CD4-positive, alpha-beta T cell (primary cell): ENCODE measurements at regions of chr14 and their contacts with region 1.

Region 1: GRCh38 chr14:22886500-22887259 is 3.7 kb downstream of the REM2 start:
- DNase-seq: peak; percentile 59 to 90 (median 75)
- ATAC-seq: peak; percentile 63
- H3K4me3 ChIP-seq: peak overlapping the region; percentile 71
- H3K4me3 Mint-ChIP-seq: peak overlapping the region; percentile 95
- H3K27ac ChIP-seq: peak overlapping the region; percentile 65 to 84
- H3K27ac Mint-ChIP-seq: peak overlapping the region; percentile 93
- H3K4me1 ChIP-seq: peaks cover 67% of the 10 kb centered on the region
- H3K4me1 Mint-ChIP-seq: peaks cover 75% of the 10 kb centered on the region
- H3K27me3 ChIP-seq: no peaks in the 10 kb centered on the region
- H3K27me3 Mint-ChIP-seq: no peaks in the 10 kb centered on the region
- CTCF ChIP-seq: peak; percentile 33

Region 2: GRCh38 chr14:21924479-21924878 is 962.2 kb before region 1 on chr14:
- CTCF ChIA-PET with region 1: no interaction called
- POLR2A ChIA-PET with region 1: no interaction called
- intact Hi-C with region 1: loop called in 1 of 2 experiments (anchors 1 kb)
- DNase-seq: peak; percentile 29 to 86 (median 56)
- ATAC-seq: peak; percentile 80
- H3K4me3 ChIP-seq: peak overlapping the region; percentile 38
- H3K4me3 Mint-ChIP-seq: peak overlapping the region; percentile 55
- H3K27ac ChIP-seq: peak overlapping the region; percentile 33 to 68
- H3K27ac Mint-ChIP-seq: peak overlapping the region; percentile 91
- H3K4me1 ChIP-seq: peaks cover 24% of the 10 kb centered on the region
- H3K4me1 Mint-ChIP-seq: peaks cover 56% of the 10 kb centered on the region
- H3K27me3 ChIP-seq: no peaks in the 10 kb centered on the region
- H3K27me3 Mint-ChIP-seq: no peaks in the 10 kb centered on the region
- CTCF ChIP-seq: peak; percentile 48

Region 3: DNA sequence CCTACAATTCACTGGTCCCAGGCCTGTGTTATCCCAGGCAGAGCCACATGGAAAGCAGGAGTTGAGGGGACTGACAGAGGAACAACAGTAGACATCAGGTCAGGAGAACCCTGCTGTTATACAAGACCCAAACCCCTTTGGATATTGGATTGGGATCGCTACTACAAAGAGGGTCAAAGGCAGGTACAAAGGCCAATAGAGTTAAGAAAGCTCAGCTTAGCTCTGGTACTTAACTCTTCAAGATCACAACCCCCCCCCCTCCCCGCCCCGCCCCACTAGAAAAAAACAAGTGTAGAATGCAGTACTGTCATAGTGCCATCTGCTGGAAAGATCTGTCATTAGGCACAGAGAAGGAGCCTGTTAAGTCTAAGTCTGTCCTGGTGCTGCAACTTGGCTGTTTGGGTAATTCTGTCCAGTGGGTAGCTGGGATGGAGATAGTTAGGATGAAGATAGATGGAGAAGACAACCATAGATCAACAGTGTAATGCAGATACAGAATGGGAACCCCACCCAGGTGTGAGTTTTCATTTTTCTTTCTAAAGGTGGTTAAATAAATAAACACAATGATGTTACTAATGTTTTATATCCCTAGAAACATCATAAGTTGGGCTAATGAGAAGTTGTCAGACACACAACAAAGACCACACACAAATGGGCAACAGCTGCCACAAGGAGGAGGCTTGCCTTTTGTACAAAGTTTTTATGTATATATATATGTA is 13.6 kb after region 1 on chr14:
- CTCF ChIA-PET with region 1: interaction called, 11 read pairs
- POLR2A ChIA-PET with region 1: interaction called, 11 read pairs
- intact Hi-C with region 1: loop called in 1 of 2 experiments (anchors 1 kb)
- DNase-seq: peak in 13 of 14 experiments; percentile 14 to 87 (median 36)
- ATAC-seq: peak; percentile 92
- H3K4me3 ChIP-seq: no peak overlapping the region
- H3K4me3 Mint-ChIP-seq: no peak overlapping the region
- H3K27ac ChIP-seq: no peak overlapping the region
- H3K27ac Mint-ChIP-seq: no peak overlapping the region
- H3K4me1 ChIP-seq: peaks cover 13% of the 10 kb centered on the region
- H3K4me1 Mint-ChIP-seq: peaks cover 15% of the 10 kb centered on the region
- H3K27me3 ChIP-seq: no peaks in the 10 kb centered on the region
- H3K27me3 Mint-ChIP-seq: no peaks in the 10 kb centered on the region
- CTCF ChIP-seq: peak; percentile 68

Region 4: DNA sequence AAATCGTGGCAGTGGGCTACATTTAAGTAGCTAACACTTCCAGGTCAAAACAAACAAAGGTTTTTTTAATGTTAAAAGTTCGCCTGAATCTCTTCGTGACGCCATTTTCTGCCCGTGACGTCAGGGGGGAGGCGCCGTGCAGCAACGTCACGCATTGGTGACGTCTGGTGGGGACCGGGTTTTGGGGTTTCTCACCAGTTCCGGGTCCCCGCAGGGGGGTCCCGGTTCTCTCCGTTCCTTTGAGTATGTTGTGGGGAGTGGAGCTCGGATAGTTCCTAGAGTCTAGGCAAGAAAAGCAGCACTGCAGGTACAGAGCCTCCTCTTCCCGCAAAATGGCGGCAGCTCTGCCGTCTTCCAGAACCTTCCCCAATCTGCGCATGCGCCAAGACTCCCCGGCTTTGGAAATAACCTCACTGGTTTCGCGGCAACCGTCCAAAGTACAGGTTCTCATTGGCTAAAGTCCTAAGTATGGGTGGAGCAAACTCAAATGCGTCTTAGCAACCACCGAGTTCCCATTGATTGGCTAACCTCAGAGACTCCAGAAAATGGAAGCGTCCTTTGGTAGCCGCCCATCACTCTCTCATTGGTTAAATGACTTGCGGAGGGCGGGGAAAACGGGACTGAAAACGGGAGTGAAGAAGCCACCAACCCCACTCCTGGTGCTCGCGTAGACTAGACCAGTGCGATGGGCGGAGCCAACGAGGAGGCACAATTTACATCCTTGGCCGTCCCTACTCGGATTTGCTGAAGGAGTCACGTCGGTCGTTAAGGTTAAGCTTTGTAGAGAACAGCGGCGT is 32.3 kb after region 1 on chr14 and contains the start of gene RBM23:
- CTCF ChIA-PET with region 1: interaction called, 8 read pairs
- POLR2A ChIA-PET with region 1: interaction called, 15 read pairs
- intact Hi-C with region 1: loop called in 1 of 2 experiments (anchors 2 kb)
- DNase-seq: peak; percentile 99 to 100 (median 100)
- ATAC-seq: peak; percentile 84
- H3K4me3 ChIP-seq: peak within 1 kb of the TSS; percentile 74
- H3K4me3 Mint-ChIP-seq: peak within 1 kb of the TSS; percentile 88
- H3K27ac ChIP-seq: peak within 1 kb of the TSS; percentile 99 to 100
- H3K27ac Mint-ChIP-seq: peak within 1 kb of the TSS; percentile 100
- H3K4me1 ChIP-seq: peaks cover 38% of the 10 kb centered on the region
- H3K4me1 Mint-ChIP-seq: peaks cover 50% of the 10 kb centered on the region
- H3K27me3 ChIP-seq: no peaks in the 10 kb centered on the region
- H3K27me3 Mint-ChIP-seq: peaks cover 4% of the 10 kb centered on the region
- CTCF ChIP-seq: no peak
- total RNA-seq, gene RBM23: 87.9 to 111 TPM